ENCODE measurements at regions of chr4 and their contacts with region 1.

Region 1: DNA sequence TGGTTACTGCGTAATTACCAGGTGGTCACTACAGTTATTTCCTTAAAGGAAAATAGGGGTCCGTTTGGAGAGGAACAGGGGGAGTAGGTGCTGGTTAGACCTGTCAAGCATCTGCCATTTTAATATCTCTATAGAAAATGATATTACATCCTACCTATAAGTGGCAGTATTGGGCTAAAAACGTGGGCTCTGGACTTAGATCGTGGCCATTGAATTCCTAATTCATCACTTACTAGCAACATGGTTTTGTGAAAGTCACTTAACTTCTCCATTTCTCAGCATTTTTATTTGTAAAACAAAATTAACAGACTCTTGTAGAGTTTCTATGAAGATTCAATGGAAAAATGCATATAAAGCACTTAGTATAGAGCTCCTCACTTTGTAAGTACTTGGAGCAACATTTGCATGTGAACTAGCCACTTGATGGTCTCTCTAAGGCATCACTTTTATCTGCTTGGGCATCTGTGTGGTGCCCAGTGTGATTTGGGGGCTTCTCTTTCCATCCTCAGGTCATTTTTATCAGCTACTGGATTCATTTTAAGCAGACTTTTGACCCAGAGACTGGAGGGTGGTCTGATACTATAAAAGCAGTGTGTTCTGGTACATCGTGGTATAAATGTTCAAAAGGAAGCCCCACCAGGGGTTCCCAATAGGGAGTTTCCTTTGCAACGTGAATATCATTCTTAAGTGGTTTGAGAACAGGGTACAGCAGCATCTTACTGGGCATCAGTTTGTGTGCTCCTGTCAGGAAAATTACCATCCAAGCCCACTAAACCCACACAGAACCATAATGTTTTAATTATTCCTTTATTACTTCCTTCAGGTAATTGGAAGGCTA is 42.7 kb upstream of the RASSF6 start:
- DNase-seq: no peak
- H3K4me3 ChIP-seq: no peak overlapping the region
- H3K27me3 ChIP-seq: no peaks in the 10 kb centered on the region
- CTCF ChIP-seq: peak; percentile 51

Region 2: DNA sequence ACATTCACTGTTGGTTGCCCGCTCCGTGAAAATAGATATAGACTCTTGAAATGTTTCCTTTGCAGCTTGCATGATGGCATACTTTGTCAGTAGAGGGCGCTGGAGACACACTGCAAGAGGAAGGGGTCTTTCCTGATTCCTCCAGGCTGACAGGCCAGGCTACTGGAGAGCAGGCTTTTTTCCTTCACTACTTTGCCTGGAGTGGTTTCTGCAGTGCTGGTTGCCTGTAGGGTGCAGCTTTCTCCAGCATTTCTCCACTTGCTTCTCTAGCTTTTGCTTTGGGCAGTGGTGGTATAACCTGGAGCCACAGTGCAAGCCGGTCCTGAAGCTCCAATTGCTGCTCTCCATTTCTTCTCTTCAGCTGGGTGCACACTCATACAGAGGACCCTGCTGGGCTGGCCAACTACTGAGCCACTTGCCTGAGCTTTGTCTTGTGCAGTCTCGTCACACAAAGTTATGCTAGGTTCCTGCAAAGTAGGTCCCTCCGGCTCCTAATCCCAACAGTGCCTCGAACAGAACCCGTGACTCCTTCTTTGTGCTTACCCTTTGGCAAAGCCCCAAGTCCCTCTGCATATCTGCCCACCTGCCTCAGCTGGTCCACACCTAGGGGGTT is 89.0 kb before region 1 on chr4:
- CTCF ChIA-PET with region 1: interaction called, 14 read pairs
- POLR2A ChIA-PET with region 1: no interaction called
- DNase-seq: peak; percentile 4
- H3K4me3 ChIP-seq: no peak overlapping the region
- H3K27me3 ChIP-seq: no peaks in the 10 kb centered on the region; the same call in 1 of the 2 replicates
- CTCF ChIP-seq: peak; percentile 87

Region 3: DNA sequence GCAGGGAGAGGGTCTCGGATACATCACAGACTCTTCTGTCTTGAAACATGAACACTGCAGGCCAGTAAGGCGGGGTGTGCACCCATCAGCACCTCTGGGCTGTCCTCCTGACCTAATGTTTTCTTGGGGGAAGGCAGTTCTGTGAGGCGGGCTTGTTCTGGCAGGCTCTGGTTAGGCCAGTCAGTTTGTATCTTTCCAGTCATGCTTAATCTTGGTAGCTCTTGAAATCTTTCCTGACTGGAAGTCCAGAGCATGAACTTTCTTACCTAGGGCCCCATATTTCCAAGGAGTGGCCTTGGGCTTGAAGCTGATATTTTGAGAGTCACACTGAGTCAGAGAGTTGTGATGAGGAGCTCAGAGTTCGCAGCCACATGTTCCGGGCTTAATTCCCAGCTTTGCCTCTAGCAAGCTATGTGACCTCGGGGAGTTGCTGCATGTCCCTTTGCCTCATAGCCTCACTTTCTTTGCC is 11.6 kb after region 1 on chr4:
- CTCF ChIA-PET with region 1: interaction called, 12 read pairs
- POLR2A ChIA-PET with region 1: no interaction called
- DNase-seq: no peak
- H3K4me3 ChIP-seq: no peak overlapping the region
- H3K27me3 ChIP-seq: no peaks in the 10 kb centered on the region
- CTCF ChIP-seq: no peak

Region 4: GRCh38 chr4:73729534-73730165 is 66.7 kb after region 1 on chr4:
- CTCF ChIA-PET with region 1: interaction called, 13 read pairs
- POLR2A ChIA-PET with region 1: no interaction called
- DNase-seq: no peak
- H3K4me3 ChIP-seq: no peak overlapping the region
- H3K27me3 ChIP-seq: no peaks in the 10 kb centered on the region
- CTCF ChIP-seq: peak; percentile 86

Region 5: GRCh38 chr4:73897380-73898136 is 234.6 kb after region 1 on chr4:
- CTCF ChIA-PET with region 1: interaction called, 10 read pairs
- POLR2A ChIA-PET with region 1: no interaction called
- DNase-seq: no peak
- H3K4me3 ChIP-seq: no peak overlapping the region
- H3K27me3 ChIP-seq: no peaks in the 10 kb centered on the region
- CTCF ChIP-seq: no peak

Region 6: DNA sequence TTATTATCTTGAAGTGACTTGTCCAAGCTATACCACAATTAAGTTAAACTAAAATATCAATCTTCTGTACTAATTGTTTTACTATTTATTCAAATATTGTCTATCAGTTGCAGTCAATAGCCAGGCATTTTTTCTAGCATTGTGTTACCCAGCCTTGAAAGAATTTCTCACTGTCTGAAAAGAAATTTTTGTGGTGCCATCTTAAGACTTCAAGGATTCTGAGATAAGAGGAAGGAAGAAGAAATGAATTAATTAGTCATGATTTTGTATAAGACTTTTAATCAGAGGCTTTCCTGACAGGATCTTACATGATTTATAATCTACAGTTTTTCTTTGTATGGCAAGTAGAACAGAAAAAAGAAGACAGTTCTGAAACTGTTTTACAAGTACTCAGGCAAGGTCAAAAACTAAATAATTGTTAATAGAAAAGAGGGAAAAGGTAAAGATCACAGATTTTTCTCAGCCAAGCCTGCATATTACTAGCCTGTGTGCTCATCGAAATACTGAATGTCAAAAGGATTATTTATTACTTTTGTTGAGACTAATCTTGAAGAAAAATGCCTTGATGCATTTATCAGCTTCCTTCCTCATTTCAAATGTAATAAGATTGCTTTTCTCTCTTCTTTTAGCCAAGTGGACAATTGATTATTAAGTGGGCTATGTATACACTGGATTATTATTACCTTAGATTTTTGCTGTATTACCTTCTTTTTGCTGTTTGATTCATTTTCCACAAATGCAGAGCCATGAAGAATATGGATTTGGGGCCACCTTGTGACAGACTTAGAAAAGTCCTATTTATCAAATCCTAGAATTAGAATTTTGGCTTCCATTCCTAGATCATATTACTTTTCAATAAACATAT is 260.1 kb after region 1 on chr4:
- CTCF ChIA-PET with region 1: interaction called, 28 read pairs
- POLR2A ChIA-PET with region 1: no interaction called
- DNase-seq: no peak
- H3K4me3 ChIP-seq: no peak overlapping the region
- H3K27me3 ChIP-seq: no peaks in the 10 kb centered on the region
- CTCF ChIP-seq: peak; percentile 43

Region 7: GRCh38 chr4:74133786-74134499 is 471.0 kb after region 1 on chr4:
- CTCF ChIA-PET with region 1: interaction called, 56 read pairs
- POLR2A ChIA-PET with region 1: no interaction called
- DNase-seq: no peak
- H3K4me3 ChIP-seq: no peak overlapping the region
- H3K27me3 ChIP-seq: no peaks in the 10 kb centered on the region
- CTCF ChIP-seq: peak; percentile 83

Measured in BJ (cell line).